ENCODE measurements at regions of chr12 and their contacts with region 1.

Region 1: DNA sequence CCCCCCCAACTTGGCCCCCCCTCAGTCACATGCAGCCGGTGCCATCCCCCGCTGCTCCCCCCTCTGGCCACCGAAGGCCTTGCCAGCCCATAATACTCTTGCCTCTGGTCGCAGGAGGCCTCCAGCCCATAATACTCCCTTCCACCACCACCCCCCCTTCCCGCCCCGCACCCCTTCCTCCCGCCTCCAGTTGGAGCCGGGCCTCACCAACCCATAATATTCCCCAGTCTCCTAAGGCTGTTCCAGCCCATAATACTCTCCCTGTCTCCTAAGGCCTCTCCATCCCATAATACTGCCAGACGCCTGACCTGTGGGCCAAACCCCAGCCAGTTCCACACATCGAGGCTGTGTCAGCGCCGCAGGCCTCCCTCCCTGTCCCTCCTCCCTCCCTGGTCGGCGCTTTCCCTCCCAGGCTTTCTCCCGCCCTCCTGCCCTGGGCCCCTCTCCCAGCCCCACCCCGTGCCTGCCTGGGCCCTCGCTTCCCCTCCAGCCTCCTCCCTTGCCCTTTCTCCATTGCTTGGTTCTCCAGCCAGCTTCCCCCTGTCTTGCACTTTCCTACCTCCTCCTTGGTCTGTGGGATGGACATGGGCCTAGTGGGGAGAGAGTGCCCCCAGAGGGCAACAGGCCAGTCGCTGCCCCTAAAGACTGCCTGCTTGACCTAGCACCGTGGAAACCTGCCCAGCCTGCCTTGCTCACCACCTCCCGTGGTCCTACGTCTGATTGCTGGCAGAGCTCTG is 6.8 kb upstream of the CHD4 start:
- DNase-seq: peak; percentile 91
- H3K4me3 ChIP-seq: no peak overlapping the region
- H3K27ac ChIP-seq: peak overlapping the region; percentile 80
- H3K4me1 ChIP-seq: peaks cover 24% of the 10 kb centered on the region
- H3K27me3 ChIP-seq: no peaks in the 10 kb centered on the region
- CTCF ChIP-seq: 0 out of 2 replicates have a peak, but pooled peaks have one; percentile 10

Region 2: GRCh38 chr12:6644903-6645302 is 31.0 kb after region 1 on chr12:
- CTCF ChIA-PET with region 1: no interaction called
- POLR2A ChIA-PET with region 1: no interaction called
- intact Hi-C with region 1: loop called (anchors 2 kb)
- DNase-seq: no peak
- H3K4me3 ChIP-seq: no peak overlapping the region
- H3K27ac ChIP-seq: no peak overlapping the region
- H3K4me1 ChIP-seq: peaks cover 3% of the 10 kb centered on the region
- H3K27me3 ChIP-seq: no peaks in the 10 kb centered on the region
- CTCF ChIP-seq: peak; percentile 57

Region 3: GRCh38 chr12:6778574-6779550 is 164.9 kb after region 1 on chr12:
- CTCF ChIA-PET with region 1: no interaction called
- POLR2A ChIA-PET with region 1: no interaction called
- intact Hi-C with region 1: loop called (anchors 5 kb)
- DNase-seq: peak; percentile 93
- H3K4me3 ChIP-seq: peak overlapping the region; percentile 30
- H3K27ac ChIP-seq: peak overlapping the region; percentile 29
- H3K4me1 ChIP-seq: peaks cover 8% of the 10 kb centered on the region
- H3K27me3 ChIP-seq: no peaks in the 10 kb centered on the region
- CTCF ChIP-seq: peak; percentile 96

Region 4: DNA sequence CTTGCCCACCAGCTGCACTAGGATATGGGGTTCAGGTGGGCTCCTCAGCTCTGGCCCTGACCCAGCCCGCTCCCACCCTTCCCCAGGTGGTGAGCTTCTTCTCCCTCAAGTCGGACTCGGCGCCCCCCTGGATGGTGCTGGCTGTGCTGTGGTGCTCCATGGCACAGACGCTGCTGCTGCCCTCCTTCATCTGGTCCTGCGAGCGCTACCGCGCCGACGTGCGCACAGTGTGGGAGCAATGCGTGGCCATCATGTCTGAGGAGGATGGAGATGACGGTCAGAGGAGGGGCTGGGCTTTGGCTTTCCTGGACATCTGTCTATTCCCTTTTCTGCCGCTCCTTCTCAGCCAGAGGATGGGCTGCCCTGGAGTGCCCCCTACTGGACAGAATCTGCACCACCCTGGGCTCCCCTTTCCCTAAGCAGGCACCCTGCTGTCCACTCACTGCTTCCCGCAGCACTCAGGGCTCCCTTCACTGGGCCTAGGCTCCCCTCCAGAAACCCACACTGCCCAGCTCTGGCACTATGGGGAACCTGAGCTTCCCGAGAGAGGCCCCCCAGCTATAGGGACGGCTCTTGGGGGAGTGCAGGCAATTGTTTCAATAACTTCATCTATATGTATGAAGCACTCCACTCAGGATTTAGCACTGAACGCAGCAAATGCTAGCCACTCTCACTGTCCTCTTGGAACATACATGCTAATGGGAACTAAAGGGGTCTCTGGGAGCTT is 211.6 kb after region 1 on chr12:
- CTCF ChIA-PET with region 1: no interaction called
- POLR2A ChIA-PET with region 1: no interaction called
- intact Hi-C with region 1: loop called (anchors 5 kb)
- DNase-seq: peak; percentile 85
- H3K4me3 ChIP-seq: no peak overlapping the region
- H3K27ac ChIP-seq: peak overlapping the region; percentile 11
- H3K4me1 ChIP-seq: peaks cover 37% of the 10 kb centered on the region
- H3K27me3 ChIP-seq: no peaks in the 10 kb centered on the region
- CTCF ChIP-seq: peak; percentile 92

Measured in A673 (cell line).